BJ (cell line): ENCODE measurements at regions of chr12 and their contacts with region 1.

Region 1: DNA sequence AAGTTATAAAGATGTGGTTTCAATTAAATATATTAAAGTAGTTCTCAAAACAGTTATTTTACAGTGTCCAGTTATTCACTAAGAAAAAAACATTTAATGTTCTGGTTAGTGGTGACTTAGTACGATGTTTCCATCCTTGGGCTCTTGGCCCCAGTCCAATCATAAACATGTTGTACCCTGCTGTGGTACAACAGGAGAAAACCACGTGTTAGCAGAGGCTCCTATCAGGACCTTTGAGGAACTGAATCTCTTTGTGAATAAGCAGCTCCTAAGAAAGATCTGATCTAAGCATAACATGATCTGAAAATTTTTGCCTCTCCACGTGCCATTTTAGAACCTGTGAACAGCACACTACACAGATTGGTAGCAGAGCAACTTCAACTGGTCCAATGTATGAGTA is 234.0 kb downstream of the SYT1 start:
- DNase-seq: no peak
- H3K4me3 ChIP-seq: no peak overlapping the region
- H3K27me3 ChIP-seq: no peaks in the 10 kb centered on the region
- CTCF ChIP-seq: no peak

Region 2: GRCh38 chr12:79127271-79127751 is 28.8 kb after region 1 on chr12:
- CTCF ChIA-PET with region 1: no interaction called
- POLR2A ChIA-PET with region 1: interaction called, 10 read pairs
- DNase-seq: peak; percentile 93
- H3K4me3 ChIP-seq: no peak overlapping the region
- H3K27me3 ChIP-seq: no peaks in the 10 kb centered on the region
- CTCF ChIP-seq: no peak

Region 3: DNA sequence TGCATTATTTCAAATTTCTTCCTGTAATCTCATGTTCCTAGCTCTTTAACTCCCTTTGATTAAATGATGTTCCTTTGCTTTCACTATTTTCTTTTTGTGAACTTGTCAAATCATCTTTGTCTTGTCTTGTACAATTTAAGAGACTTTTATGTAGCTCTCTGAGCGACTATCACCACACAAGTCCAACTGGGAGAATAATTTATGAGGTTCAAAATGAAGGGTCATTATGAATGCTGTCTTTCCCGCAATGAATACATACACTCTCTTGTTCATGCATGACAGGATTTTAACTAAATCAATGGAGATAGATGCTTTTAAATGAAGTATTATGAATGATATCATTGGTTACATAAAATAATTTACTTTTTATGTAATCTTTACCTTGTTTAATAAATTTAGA is 184.8 kb after region 1 on chr12:
- CTCF ChIA-PET with region 1: no interaction called
- POLR2A ChIA-PET with region 1: no interaction called
- DNase-seq: no peak
- H3K4me3 ChIP-seq: no peak overlapping the region
- H3K27me3 ChIP-seq: no peaks in the 10 kb centered on the region
- CTCF ChIP-seq: no peak

Region 4: GRCh38 chr12:79873201-79873600 is 774.7 kb after region 1 on chr12:
- CTCF ChIA-PET with region 1: no interaction called
- POLR2A ChIA-PET with region 1: no interaction called
- DNase-seq: no peak
- H3K4me3 ChIP-seq: no peak overlapping the region
- H3K27me3 ChIP-seq: no peaks in the 10 kb centered on the region
- CTCF ChIP-seq: no peak